PC-9 (cell line): ENCODE measurements at regions of chr11 and their contacts with region 1.

Region 1: DNA sequence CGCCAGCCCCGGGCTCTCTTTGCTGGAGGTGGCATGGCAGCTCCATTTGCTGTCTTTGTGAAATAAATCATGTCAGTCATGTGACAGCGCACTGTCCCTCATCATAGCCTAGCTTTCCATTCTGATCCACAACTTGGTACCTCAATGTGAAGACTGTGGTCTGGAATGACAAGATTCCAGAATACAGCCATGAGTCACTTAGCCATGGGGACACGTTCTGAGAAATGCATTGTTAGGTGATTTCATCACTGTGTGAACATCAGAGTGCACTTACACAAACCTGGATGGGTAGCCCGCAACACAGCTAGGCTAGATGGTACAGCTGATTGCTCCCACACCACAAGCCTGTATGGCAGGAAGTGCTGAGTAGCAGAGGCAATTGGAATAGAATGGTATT is 27.3 kb downstream of the RPS6KA4 start:
- DNase-seq: peak; percentile 81 to 98
- H3K4me3 ChIP-seq: no peak overlapping the region
- H3K27ac ChIP-seq: no peak overlapping the region
- H3K4me1 ChIP-seq: peaks cover 44% of the 10 kb centered on the region
- H3K27me3 ChIP-seq: no peaks in the 10 kb centered on the region
- CTCF ChIP-seq: no peak

Region 2: DNA sequence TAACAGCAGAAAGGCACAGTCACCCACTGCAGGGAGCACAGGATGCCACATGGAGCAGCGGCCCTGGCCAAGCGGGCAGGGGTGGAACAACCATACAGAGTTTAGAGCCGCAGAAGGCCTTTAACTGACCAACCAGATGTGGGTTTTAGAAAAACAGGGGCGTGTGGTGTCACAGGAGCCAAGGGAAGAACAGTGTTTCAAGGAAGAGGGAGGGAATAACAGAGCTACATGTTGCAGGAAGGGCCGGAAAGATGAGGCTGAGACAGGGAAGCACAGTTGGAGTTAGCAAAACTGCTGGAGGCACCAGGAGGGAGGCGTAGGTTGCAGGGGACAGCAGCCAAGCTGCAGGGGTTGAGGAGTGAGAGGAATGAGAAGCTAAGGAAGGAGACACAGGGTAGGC is 455.3 kb before region 1 on chr11:
- CTCF ChIA-PET with region 1: no interaction called
- POLR2A ChIA-PET with region 1: no interaction called
- intact Hi-C with region 1: no loop called
- DNase-seq: no peak
- H3K4me3 ChIP-seq: no peak overlapping the region
- H3K27ac ChIP-seq: no peak overlapping the region
- H3K4me1 ChIP-seq: peaks cover 20% of the 10 kb centered on the region
- H3K27me3 ChIP-seq: no peaks in the 10 kb centered on the region
- CTCF ChIP-seq: no peak

Region 3: GRCh38 chr11:64372802-64373597 is 13.3 kb before region 1 on chr11:
- CTCF ChIA-PET with region 1: no interaction called
- POLR2A ChIA-PET with region 1: no interaction called
- intact Hi-C with region 1: no loop called
- DNase-seq: no peak
- H3K4me3 ChIP-seq: no peak overlapping the region
- H3K27ac ChIP-seq: no peak overlapping the region
- H3K4me1 ChIP-seq: no peaks in the 10 kb centered on the region
- H3K27me3 ChIP-seq: no peaks in the 10 kb centered on the region
- CTCF ChIP-seq: no peak

Region 4: GRCh38 chr11:64439106-64439778 is 52.9 kb after region 1 on chr11:
- CTCF ChIA-PET with region 1: no interaction called
- POLR2A ChIA-PET with region 1: no interaction called
- intact Hi-C with region 1: loop called (anchors 1 kb)
- DNase-seq: peak; percentile 73 to 91
- H3K4me3 ChIP-seq: peak overlapping the region; percentile 46; the same call in 1 of the 2 replicates
- H3K27ac ChIP-seq: peak overlapping the region; percentile 80
- H3K4me1 ChIP-seq: peaks cover 58% of the 10 kb centered on the region
- H3K27me3 ChIP-seq: no peaks in the 10 kb centered on the region
- CTCF ChIP-seq: no peak

Region 5: DNA sequence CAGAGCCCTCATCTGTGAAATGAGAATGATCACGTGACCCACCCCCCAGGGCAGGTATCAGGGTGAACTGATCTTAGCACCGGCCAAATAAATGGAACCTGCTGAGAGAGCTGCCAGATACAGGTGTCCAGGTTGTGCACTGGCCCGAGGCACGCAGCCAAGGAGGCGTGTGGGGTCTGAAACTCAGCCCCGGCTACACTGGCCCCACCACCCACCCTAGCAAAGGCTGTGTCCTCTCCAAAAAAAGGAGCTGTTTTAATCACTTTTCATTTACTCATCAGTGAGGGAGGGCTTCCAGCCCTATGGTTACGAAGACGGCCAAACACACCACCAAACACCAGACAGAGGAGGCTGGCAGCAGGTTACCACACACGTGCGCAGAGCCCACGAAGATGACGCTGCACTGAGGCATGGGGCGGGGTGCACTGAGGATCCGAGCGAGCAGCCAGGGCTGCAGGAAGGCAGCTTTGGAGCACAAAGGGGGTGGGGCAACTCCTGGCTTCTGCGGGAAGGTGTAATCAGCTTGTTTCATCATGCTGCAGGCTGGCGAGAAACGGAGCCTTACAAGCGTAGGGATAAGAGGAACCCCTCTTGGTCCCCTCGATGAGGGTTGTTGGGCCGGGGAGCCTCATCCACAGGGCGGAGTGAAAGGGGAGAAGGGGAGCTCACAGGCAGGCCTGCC is 185.2 kb after region 1 on chr11:
- CTCF ChIA-PET with region 1: no interaction called
- POLR2A ChIA-PET with region 1: interaction called, 10 read pairs
- intact Hi-C with region 1: no loop called
- DNase-seq: peak in 1 of 2 experiments; percentile 86
- H3K4me3 ChIP-seq: no peak overlapping the region
- H3K27ac ChIP-seq: no peak overlapping the region
- H3K4me1 ChIP-seq: 0 out of 2 replicates have a peak, but pooled peaks cover 3% of the 10 kb centered on the region
- H3K27me3 ChIP-seq: no peaks in the 10 kb centered on the region
- CTCF ChIP-seq: no peak

Region 6: DNA sequence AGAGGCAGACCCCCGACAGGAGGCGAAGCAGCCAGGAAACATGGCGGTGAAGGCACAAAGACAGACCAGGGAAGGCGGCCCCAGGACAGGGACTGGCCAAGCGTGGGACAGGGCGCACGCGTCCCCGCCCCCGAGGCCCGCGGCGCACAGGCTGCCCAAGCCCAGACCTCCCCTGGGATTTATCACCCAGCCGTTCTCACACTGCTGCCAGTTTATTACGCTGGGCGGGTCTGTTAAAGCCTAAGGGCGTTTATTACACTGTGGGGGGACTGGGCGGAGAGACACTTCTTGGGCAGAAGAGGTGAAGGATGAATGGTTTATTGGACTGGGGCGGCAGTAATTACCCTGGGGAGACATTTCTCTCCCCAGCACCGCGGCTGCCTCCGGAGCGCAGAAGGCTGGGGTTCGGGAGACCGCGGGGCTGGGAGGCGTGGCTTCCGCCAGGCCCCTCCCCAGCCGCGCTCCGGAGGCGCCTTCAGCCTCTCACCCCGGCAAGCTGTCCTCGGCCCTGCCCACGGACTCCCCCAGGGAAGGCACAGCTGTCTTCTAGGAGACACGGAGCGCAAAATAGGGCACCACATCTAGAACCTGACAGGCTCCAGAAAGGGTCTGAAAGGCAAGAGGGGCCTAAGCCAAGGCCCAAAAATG is 251.8 kb after region 1 on chr11:
- CTCF ChIA-PET with region 1: no interaction called
- POLR2A ChIA-PET with region 1: no interaction called
- intact Hi-C with region 1: no loop called
- DNase-seq: no peak
- H3K4me3 ChIP-seq: no peak overlapping the region
- H3K27ac ChIP-seq: no peak overlapping the region
- H3K4me1 ChIP-seq: no peaks in the 10 kb centered on the region
- H3K27me3 ChIP-seq: peaks cover 67% of the 10 kb centered on the region
- CTCF ChIP-seq: no peak

Region 7: GRCh38 chr11:64729851-64730382 is 343.6 kb after region 1 on chr11:
- CTCF ChIA-PET with region 1: no interaction called
- POLR2A ChIA-PET with region 1: interaction called, 20 read pairs
- intact Hi-C with region 1: no loop called
- DNase-seq: peak in 1 of 2 experiments; percentile 34
- H3K4me3 ChIP-seq: no peak overlapping the region
- H3K27ac ChIP-seq: no peak overlapping the region
- H3K4me1 ChIP-seq: no peaks in the 10 kb centered on the region
- H3K27me3 ChIP-seq: peaks cover 56% of the 10 kb centered on the region
- CTCF ChIP-seq: no peak